Activated CD4-positive, alpha-beta memory T cell treated with anti-CD3 and anti-CD28 coated beads for 36 hours (primary cell): ENCODE measurements at regions of chr2 and their contacts with region 1.

Region 1: DNA sequence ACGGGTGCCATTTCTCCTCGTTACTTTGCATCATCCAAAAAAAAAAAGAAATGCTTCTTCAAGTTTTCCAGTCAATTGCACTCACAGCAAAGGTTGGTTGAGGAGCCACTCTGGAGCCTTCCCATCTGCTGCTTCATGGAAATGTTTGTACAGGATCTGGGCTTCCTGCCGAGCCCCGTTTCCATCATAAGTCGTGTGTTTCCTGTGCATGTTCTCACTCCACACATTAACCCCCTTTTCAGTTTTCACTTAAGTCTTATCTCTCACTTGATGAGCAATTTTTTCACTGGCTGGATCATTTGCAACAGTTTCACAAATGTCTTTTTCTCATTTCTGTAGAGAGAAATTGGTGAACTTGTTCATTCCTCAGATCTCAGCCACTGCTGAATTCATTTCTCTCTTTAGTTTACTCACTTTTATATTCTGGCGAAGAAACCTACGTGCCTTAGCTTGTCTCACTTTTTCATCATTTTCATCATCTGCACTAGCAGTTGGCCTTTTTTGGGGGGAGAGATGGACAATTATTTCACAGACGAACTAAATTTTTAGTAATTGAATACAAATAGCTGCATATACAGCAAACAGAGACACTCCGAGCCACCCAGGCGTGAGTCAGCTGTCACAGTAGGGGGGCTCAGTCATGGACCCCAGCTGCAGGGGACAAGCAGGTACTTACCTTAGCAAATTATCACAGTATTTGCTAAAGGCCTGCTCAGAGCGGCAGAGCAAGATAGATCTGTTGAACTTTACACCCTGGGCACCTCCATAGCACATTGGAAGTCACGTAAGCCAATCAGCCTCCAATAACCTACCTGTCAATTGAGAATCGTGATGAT is 750.8 kb upstream of the ID2 start:
- DNase-seq: peak; percentile 62
- H3K4me3 Mint-ChIP-seq: peak overlapping the region; percentile 1
- H3K27ac Mint-ChIP-seq: peak overlapping the region; percentile 88
- H3K4me1 Mint-ChIP-seq: peaks cover 31% of the 10 kb centered on the region
- H3K27me3 Mint-ChIP-seq: peaks cover 3% of the 10 kb centered on the region

Region 2: DNA sequence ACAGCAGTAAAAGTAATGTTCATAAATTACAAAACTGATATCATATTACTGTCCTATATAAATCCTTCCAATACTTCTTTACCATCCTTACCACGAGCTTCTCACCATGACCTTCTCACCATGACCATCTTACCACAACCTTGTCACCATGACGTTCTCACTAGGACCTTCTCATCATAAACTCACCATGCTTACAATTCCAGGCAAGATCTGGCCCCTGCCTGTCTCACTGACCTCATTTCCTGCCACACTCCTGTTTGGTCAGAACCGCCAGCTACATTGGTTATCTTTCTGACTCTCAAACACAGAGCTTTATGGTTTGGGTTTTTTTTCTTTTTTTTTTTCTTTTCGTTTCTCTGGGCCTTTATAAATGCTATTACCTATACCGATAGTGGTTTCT is 186.2 kb before region 1 on chr2:
- CTCF ChIA-PET with region 1: no interaction called
- POLR2A ChIA-PET with region 1: no interaction called
- intact Hi-C with region 1: loop called (anchors 5 kb)
- DNase-seq: peak; percentile 76
- H3K4me3 Mint-ChIP-seq: no peak overlapping the region
- H3K27ac Mint-ChIP-seq: peak overlapping the region; percentile 64
- H3K4me1 Mint-ChIP-seq: peaks cover 32% of the 10 kb centered on the region
- H3K27me3 Mint-ChIP-seq: no peaks in the 10 kb centered on the region

Region 3: GRCh38 chr2:7825591-7826312 is 105.3 kb before region 1 on chr2:
- CTCF ChIA-PET with region 1: no interaction called
- POLR2A ChIA-PET with region 1: interaction called, 6 read pairs
- intact Hi-C with region 1: loop called (anchors 1 kb)
- DNase-seq: peak; percentile 87
- H3K4me3 Mint-ChIP-seq: no peak overlapping the region
- H3K27ac Mint-ChIP-seq: peak overlapping the region; percentile 89
- H3K4me1 Mint-ChIP-seq: peaks cover 34% of the 10 kb centered on the region
- H3K27me3 Mint-ChIP-seq: peaks cover 3% of the 10 kb centered on the region

Region 4: GRCh38 chr2:7984693-7985353 is 53.8 kb after region 1 on chr2:
- CTCF ChIA-PET with region 1: no interaction called
- POLR2A ChIA-PET with region 1: no interaction called
- intact Hi-C with region 1: loop called (anchors 1 kb)
- DNase-seq: no peak
- H3K4me3 Mint-ChIP-seq: no peak overlapping the region
- H3K27ac Mint-ChIP-seq: peak overlapping the region; percentile 66
- H3K4me1 Mint-ChIP-seq: peaks cover 28% of the 10 kb centered on the region
- H3K27me3 Mint-ChIP-seq: peaks cover 5% of the 10 kb centered on the region

Region 5: GRCh38 chr2:8408560-8409460 is 477.8 kb after region 1 on chr2:
- CTCF ChIA-PET with region 1: interaction called, 6 read pairs
- POLR2A ChIA-PET with region 1: no interaction called
- intact Hi-C with region 1: loop called (anchors 1 kb)
- DNase-seq: peak; percentile 91
- H3K4me3 Mint-ChIP-seq: peak overlapping the region; percentile 0
- H3K27ac Mint-ChIP-seq: peak overlapping the region; percentile 79
- H3K4me1 Mint-ChIP-seq: peaks cover 34% of the 10 kb centered on the region
- H3K27me3 Mint-ChIP-seq: no peaks in the 10 kb centered on the region